HCT116 (cell line): ENCODE measurements at regions of chr11 and their contacts with region 1.

Region 1: DNA sequence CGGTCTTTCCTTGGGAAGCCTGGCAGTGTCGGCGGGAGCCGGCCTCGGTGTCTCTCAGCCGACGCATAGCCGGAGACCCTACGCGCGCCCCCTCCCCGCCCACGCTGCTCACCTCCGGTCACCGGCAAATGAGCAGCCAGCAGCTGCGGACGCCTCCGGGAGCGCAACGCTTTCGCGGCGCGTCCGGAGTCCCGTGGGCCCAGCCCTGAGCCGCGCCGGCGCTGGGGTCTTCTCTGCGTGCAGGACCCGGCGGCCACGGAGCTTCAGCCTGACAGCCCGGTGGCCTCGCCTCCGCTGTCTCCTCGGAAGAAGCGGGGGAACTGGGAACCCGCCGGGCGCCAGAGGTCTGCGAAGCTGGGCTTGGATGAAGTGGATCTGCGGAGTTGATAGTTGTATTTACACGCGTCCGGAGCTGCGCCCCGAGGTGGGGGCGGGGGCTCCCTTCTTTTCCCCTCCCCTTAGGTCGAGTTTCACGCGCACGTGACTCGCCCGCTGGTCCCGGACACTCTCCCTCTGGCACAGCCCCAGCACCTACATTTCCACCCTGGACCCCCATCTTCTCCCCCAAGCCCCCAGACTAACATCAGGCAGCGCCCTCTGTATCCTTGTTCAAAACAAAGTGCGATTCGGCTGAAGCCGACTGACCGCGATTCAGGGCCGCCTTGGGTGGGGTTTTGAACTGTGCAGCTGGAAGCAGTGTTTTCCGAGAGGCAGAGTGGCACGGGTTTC is at the start of gene SLC43A1:
- DNase-seq: no peak
- ATAC-seq: peak; percentile 84
- H3K4me3 ChIP-seq: peak within 1 kb of the TSS; percentile 70 to 73
- H3K27ac ChIP-seq: peak within 1 kb of the TSS; percentile 45; the same call in 1 of the 2 replicates
- H3K4me1 ChIP-seq: peaks cover 3 to 15% of the 10 kb centered on the region in 2 experiments; a peak in 3 of 4 replicates
- H3K27me3 ChIP-seq: no peaks in the 10 kb centered on the region
- CTCF ChIP-seq: no peak
- POLR2A ChIP-seq: peak; percentile 64
- RAD21 ChIP-seq: no peak
- total RNA-seq, gene SLC43A1: 11.8 TPM

Region 2: DNA sequence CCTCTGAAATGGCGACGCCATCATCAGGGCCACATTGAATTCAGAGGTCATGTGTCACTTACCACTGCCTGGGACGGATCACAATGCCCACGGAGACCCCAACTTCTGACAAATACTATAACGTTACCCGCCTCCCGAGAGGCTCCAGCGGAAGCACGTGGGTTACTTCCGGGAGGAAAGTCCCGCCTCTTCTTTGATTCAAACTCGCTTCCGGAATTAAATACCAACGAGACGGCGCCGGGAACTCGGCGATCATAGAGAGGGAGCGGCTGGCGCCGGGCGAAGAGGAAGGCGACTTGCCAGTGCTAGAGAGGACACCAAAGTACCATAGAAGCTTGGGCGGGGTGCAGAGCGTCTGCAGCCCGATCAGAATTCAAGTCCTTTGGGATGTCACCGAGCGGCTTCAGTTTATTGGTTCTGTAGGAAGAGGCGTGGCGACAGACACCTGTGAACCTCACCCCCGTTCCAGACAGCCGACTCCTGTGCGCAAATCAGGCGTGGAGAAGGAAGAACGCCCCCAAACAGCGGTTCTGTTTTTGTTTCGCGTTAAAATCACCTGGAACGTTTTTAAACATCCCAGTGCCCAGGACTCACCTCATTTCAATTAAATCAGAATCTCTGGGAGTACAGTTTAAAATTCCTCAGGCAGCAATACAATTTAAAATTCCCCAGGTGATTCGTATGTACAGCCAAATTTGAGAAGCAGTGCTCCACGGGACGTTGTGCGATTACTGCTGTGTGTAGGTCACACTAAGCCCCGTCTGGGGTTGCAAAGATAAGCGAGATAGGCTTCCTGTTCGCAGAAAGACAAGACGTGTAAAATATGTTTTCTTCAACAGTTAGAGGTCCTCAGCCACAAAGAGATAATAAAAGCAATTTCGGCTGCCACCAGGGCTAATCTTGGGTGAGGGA is 15.4 kb after region 1 on chr11 and contains the start of gene TIMM10:
- CTCF ChIA-PET with region 1: interaction called, 15 read pairs
- POLR2A ChIA-PET with region 1: no interaction called
- RAD21 ChIA-PET with region 1: no interaction called
- intact Hi-C with region 1: no loop called
- DNase-seq: peak; percentile 99
- ATAC-seq: peak; percentile 95
- H3K4me3 ChIP-seq: peak within 1 kb of the TSS; percentile 64 to 84
- H3K27ac ChIP-seq: peak within 1 kb of the TSS; percentile 61
- H3K4me1 ChIP-seq: peaks cover 16 to 17% of the 10 kb centered on the region in 2 experiments
- H3K27me3 ChIP-seq: no peaks in the 10 kb centered on the region
- CTCF ChIP-seq: no peak
- POLR2A ChIP-seq: peak; percentile 75
- RAD21 ChIP-seq: peak; percentile 16; the same call in 1 of the 2 replicates
- total RNA-seq, gene TIMM10: 65.6 TPM